Thyroid gland (tissue), 4 donors: ENCODE measurements at regions of chr12 and their contacts with region 1.

Region 1: DNA sequence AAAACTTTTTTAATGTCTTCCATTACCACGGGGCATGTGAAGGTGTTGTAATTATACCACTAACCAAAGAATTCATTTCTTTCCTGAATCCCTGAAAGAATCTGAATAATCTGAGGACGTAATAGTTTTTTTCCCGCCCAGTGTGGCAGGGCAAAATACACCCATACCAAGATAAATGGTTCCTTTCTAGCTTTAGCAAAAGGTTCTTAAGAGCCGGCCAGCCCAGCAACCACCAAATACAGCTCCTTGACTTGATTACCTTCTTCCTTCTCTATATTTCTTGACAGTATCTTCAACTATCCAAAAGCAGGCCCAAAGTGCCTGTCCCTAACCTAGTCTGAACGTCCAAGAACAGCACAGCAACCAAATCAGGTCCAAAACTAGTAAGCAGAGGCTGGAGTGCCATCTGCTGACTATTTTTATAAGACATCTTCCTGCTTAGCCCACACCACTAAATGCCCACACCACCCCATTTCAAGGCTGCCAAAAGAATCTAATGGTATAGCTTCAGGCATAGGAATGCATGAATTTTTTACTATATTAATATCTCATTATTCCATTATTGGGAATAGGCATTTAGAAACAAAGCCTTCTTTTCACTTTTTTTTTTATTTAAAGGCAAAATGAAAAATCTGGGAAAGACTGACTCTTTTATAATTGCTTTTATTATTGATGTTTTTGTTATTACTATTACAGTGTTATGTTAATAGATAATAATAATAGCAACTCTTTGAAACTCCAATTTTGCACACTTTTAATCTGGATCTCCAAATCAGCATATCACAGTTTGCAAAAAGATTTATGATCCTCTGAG is 524.4 kb downstream of the MED13L start:
- DNase-seq: peak; percentile 46 to 51
- H3K4me3 ChIP-seq: no peak overlapping the region
- H3K27ac ChIP-seq: no peak overlapping the region
- H3K4me1 ChIP-seq: peaks cover 17% of the 10 kb centered on the region in 2 donors
- H3K27me3 ChIP-seq: no peaks in the 10 kb centered on the region
- CTCF ChIP-seq: peak in 5 of 6 experiments; percentile 40 to 93 (median 77)
- POLR2A ChIP-seq: no peak

Region 2: GRCh38 chr12:114668151-114668885 is 1084.8 kb before region 1 on chr12:
- intact Hi-C with region 1: loop called (anchors 5 kb)
- DNase-seq: peak; percentile 92 to 93
- H3K4me3 ChIP-seq: peak overlapping the region in 2 of 3 donors; percentile 34 to 37
- H3K27ac ChIP-seq: peak overlapping the region; percentile 92 to 99 (median 99)
- H3K4me1 ChIP-seq: peaks cover 9 to 14% of the 10 kb centered on the region in 2 donors
- H3K27me3 ChIP-seq: no peaks in the 10 kb centered on the region
- CTCF ChIP-seq: peak in 5 of 6 experiments; percentile 15 to 85 (median 65)
- POLR2A ChIP-seq: peak in 1 of 2 donors; percentile 73

Region 3: DNA sequence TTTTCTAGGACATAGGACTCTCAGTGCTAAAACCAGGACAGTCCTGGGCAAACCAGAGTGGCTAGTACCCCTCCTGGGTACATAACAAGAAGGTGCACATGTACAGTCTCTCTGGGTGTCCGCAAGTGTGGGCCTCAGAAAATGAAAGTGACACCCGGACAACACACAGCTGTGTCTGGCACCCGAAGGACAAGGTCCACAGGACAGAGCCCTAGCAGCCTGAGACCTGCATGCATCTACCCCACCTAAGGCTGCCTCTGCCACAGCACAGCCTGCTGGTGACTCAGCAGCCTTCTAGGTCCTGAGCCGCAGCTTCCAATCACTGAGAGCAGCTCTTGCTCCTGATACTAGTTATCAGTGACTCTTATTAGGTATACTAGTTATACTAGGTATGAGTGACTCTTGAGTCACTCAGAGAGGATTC is 285.0 kb before region 1 on chr12:
- intact Hi-C with region 1: no loop called
- DNase-seq: peak; percentile 14 to 17
- H3K4me3 ChIP-seq: no peak overlapping the region
- H3K27ac ChIP-seq: no peak overlapping the region
- H3K4me1 ChIP-seq: no peaks in the 10 kb centered on the region
- H3K27me3 ChIP-seq: no peaks in the 10 kb centered on the region
- CTCF ChIP-seq: no peak
- POLR2A ChIP-seq: no peak

Region 4: GRCh38 chr12:115771065-115771464 is 17.9 kb after region 1 on chr12:
- intact Hi-C with region 1: no loop called
- DNase-seq: peak; percentile 33 to 35
- H3K4me3 ChIP-seq: no peak overlapping the region
- H3K27ac ChIP-seq: no peak overlapping the region
- H3K4me1 ChIP-seq: peaks cover 5 to 13% of the 10 kb centered on the region in 2 donors
- H3K27me3 ChIP-seq: no peaks in the 10 kb centered on the region
- CTCF ChIP-seq: peak in 4 of 6 experiments; percentile 3 to 32 (median 26)
- POLR2A ChIP-seq: no peak